Activated T-helper 1 cell treated with anti-CD3 and anti-CD28 coated beads, Interleukin-12 subunit alpha, Interleukin-12 subunit beta, Interleukin-2, Interleukin-4 antibody, amounts not matched to agents 30 ng/mL and 10 ng/mL and 1 ng/mL, durations not matched to agents 14 hours and 24 hours and 36 hours (primary cell): ENCODE measurements at regions of chr12 and their contacts with region 1.

Region 1: GRCh38 chr12:8045952-8046944 is 13.7 kb downstream of the FOXJ2 start:
- DNase-seq: peak; percentile 65
- H3K4me3 Mint-ChIP-seq: no peak overlapping the region
- H3K27ac Mint-ChIP-seq: no peak overlapping the region
- H3K4me1 Mint-ChIP-seq: peaks cover 18% of the 10 kb centered on the region
- H3K27me3 Mint-ChIP-seq: no peaks in the 10 kb centered on the region

Region 2: DNA sequence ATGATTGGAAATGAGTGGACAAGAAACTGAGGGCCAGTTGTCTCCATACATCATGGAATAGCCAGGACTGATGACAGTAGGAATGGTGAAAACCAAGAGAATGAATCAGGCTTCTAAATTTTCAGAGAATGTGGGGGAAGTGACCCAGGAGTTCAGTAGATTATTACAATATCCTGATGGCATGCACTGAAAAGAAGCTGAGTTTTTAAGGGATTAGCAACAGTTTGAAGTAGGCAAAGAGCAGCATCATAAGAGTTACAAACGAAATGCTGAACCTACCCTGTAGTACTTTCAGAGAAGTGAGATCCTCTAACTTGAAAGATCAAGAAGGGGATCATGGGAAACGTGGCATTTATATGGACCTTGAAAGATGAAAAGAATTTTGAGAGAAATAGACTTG is 186.7 kb before region 1 on chr12:
- intact Hi-C with region 1: loop called (anchors 1 kb)
- DNase-seq: no peak
- H3K4me3 Mint-ChIP-seq: no peak overlapping the region
- H3K27ac Mint-ChIP-seq: no peak overlapping the region
- H3K4me1 Mint-ChIP-seq: peaks cover 21% of the 10 kb centered on the region
- H3K27me3 Mint-ChIP-seq: peaks cover 9% of the 10 kb centered on the region

Region 3: GRCh38 chr12:8108808-8109398 is 62.7 kb after region 1 on chr12:
- intact Hi-C with region 1: loop called (anchors 1 kb)
- DNase-seq: peak; percentile 55
- H3K4me3 Mint-ChIP-seq: no peak overlapping the region
- H3K27ac Mint-ChIP-seq: no peak overlapping the region
- H3K4me1 Mint-ChIP-seq: no peaks in the 10 kb centered on the region
- H3K27me3 Mint-ChIP-seq: no peaks in the 10 kb centered on the region

Region 4: DNA sequence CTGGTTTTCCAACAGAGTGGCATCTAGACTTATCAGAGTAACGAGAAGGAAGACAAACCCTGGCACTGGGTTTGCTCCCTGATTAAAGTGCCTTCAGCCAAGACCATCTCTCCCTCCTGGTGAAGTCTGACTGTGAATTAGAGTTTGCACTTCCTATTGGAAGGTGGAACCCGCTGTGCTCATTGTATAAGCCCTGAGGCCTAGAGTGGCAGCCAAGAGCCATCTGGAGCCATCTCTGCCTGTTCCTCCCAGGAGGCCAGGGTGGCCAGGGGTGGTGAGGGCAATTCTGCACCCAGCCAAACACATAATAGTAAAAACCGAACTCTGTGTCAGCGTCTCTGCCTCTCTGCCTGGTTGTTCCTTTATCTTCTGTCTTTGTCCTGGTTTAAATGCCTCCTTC is 591.4 kb after region 1 on chr12:
- intact Hi-C with region 1: no loop called
- DNase-seq: no peak
- H3K4me3 Mint-ChIP-seq: no peak overlapping the region
- H3K27ac Mint-ChIP-seq: no peak overlapping the region
- H3K4me1 Mint-ChIP-seq: no peaks in the 10 kb centered on the region
- H3K27me3 Mint-ChIP-seq: peaks cover 60% of the 10 kb centered on the region